GM12878 (cell line): ENCODE measurements at regions of chr2 and their contacts with region 1.

Region 1: DNA sequence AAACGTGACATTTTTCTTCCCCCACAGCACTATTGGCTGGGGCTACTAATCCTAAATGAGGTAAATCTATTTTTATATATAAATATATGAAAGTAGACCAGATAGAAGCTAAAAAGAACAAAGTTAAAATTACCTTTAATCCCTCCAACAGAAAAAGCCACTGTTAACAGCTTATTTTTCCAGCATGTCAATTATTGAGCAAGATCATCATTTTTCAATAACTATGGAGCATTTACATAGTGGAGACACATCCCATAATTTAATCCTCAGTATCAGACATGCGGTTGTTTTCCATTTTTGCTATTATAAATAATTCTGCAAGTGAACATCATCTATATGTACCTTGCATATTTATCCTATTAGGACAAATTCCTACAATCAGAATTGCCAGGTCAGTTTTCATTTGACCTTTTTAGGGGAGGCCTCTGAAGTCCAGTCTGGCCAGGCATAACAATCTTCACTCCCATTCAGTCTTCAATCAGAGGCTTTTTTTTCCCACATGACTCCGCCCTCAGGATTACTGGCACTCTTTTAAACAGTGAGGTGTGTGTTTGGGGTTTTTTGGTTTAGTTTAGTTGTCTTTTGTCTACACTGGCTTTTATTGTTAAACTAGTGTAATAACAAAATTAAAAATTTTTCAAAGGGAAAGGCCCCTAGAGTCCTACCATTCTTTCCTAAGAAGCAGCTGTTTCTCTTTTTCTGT is 29.2 kb downstream of the SMARCAL1 start:
- DNase-seq: no peak
- ATAC-seq: no peak
- H3K4me3 ChIP-seq: no peak overlapping the region
- H3K27ac ChIP-seq: no peak overlapping the region
- H3K4me1 ChIP-seq: no peaks in the 10 kb centered on the region
- H3K27me3 ChIP-seq: no peaks in the 10 kb centered on the region
- CTCF ChIP-seq: no peak
- EP300 ChIP-seq: no peak
- POLR2A ChIP-seq: no peak
- RAD21 ChIP-seq: no peak

Region 2: GRCh38 chr2:216404010-216404618 is 37.3 kb before region 1 on chr2:
- CTCF ChIA-PET with region 1: interaction called, 13 read pairs
- POLR2A ChIA-PET with region 1: no interaction called
- RAD21 ChIA-PET with region 1: no interaction called
- SMC1A ChIA-PET with region 1: no interaction called
- in situ Hi-C with region 1: no loop called
- intact Hi-C with region 1: no loop called
- DNase-seq: no peak
- ATAC-seq: peak; percentile 89
- H3K4me3 ChIP-seq: no peak overlapping the region
- H3K27ac ChIP-seq: no peak overlapping the region
- H3K4me1 ChIP-seq: no peaks in the 10 kb centered on the region
- H3K27me3 ChIP-seq: no peaks in the 10 kb centered on the region; a peak in 1 of 4 replicates
- CTCF ChIP-seq: peak; percentile 65 to 86 (median 77)
- EP300 ChIP-seq: no peak
- POLR2A ChIP-seq: no peak
- RAD21 ChIP-seq: peak; percentile 64